ENCODE measurements at regions of chrX and their contacts with region 1.

Region 1: DNA sequence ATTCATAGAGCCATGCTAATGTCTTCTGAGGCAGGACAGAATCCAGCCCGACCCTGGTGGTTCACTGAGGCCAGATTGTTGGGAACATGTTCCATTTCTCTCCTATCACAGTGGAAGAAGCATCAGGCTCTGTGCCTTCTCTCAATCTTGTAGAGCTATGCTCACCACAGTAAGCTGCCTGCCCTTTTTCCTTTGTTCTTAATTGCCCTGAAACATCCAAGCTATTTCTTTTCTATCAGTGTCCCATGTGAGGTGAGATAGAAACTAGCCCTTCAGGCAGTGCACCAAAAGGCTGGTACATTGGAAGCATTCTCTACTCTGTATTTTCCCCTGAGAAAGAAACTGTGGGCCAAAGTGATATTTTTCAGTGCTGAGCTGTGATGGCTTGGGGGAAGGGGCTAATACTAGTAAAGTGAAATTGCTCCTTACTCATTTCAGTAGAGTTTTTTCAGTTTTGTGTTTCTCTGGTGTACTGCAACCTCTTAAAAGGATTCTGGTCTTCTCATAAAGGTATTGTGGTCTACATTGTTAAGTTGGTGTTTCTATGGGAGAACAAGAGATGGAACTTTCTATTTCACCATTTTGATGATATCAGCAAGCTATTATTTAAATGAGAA is 611.2 kb downstream of the RPA4 start:
- DNase-seq: no peak
- H3K4me3 Mint-ChIP-seq: no peak overlapping the region
- H3K27ac Mint-ChIP-seq: no peak overlapping the region
- H3K4me1 Mint-ChIP-seq: no peaks in the 10 kb centered on the region
- H3K27me3 Mint-ChIP-seq: no peaks in the 10 kb centered on the region

Region 2: GRCh38 chrX:97525944-97526343 is 31.1 kb after region 1 on chrX:
- intact Hi-C with region 1: loop called (anchors 1 kb)
- DNase-seq: no peak
- H3K4me3 Mint-ChIP-seq: no peak overlapping the region
- H3K27ac Mint-ChIP-seq: no peak overlapping the region
- H3K4me1 Mint-ChIP-seq: no peaks in the 10 kb centered on the region
- H3K27me3 Mint-ChIP-seq: no peaks in the 10 kb centered on the region